ENCODE measurements at regions of chrX and their contacts with region 1.

Region 1: GRCh38 chrX:128166009-128166408 is 113.8 kb upstream of the ACTRT1 start:
- DNase-seq: no peak

Region 2: GRCh38 chrX:129262912-129263311 is 1096.9 kb after region 1 on chrX:
- intact Hi-C with region 1: no loop called
- DNase-seq: no peak

Region 3: DNA sequence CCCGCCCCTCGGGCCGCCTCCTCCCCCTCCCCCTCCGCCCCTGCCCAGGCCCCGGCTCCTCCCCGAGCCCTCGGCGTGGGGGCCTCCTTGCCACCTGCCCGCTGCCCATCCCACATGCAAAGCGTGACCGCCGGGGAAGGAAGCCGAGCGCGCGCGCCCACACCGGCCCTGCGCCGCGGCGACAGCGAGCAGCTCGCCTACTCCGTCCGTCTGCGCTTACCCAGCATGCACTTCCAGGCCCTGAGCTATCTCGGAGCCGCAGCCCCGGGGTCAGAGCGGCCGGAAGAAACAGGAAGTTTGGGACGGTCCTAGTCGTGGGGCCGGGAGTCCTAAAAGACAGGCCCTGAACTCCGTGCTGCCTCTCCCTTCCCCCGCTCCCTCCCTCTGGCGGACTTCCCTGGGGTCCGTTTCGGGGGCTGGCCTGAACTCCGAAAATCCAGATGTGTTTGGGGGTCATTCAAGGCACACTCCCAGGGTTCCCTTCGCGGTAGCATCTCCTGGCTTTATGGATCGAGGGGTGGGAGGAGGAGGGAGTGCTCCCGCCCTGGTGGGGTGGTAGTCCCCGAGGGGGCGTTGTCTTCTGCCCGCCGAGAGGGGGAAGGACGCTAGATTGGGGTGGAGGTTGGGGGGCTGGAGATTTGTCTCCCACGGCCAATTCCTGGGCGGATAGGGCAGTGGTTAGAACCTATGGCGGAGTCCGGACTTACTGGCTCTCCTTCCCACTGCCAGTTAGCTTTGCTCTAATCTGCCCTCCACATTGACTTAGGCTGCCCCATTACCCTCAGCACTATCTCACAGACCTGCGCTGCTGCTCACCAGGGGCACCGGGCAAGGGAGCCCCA is 1791.5 kb after region 1 on chrX:
- intact Hi-C with region 1: loop called in 1 of 2 experiments (anchors 10 kb)
- DNase-seq: peak; percentile 90